ENCODE measurements at regions of chr10 and their contacts with region 1.

Region 1: GRCh38 chr10:116654816-116655215 is 34.1 kb downstream of the PNLIPRP2 start:
- DNase-seq: peak; percentile 32
- ATAC-seq: peak; percentile 98
- H3K4me3 Mint-ChIP-seq: no peak overlapping the region
- H3K27ac Mint-ChIP-seq: no peak overlapping the region
- H3K4me1 Mint-ChIP-seq: no peaks in the 10 kb centered on the region
- H3K27me3 Mint-ChIP-seq: no peaks in the 10 kb centered on the region; the same call in 1 of the 2 replicates
- CTCF ChIP-seq: peak; percentile 31; the same call in 1 of the 2 replicates

Region 2: GRCh38 chr10:116353817-116354216 is 301.0 kb before region 1 on chr10:
- CTCF ChIA-PET with region 1: no interaction called
- POLR2A ChIA-PET with region 1: no interaction called
- DNase-seq: no peak
- ATAC-seq: no peak
- H3K4me3 Mint-ChIP-seq: no peak overlapping the region
- H3K27ac Mint-ChIP-seq: no peak overlapping the region
- H3K4me1 Mint-ChIP-seq: peaks cover 11% of the 10 kb centered on the region
- H3K27me3 Mint-ChIP-seq: no peaks in the 10 kb centered on the region
- CTCF ChIP-seq: no peak

Region 3: GRCh38 chr10:116553378-116553980 is 101.3 kb before region 1 on chr10:
- CTCF ChIA-PET with region 1: no interaction called
- POLR2A ChIA-PET with region 1: no interaction called
- DNase-seq: no peak
- ATAC-seq: no peak
- H3K4me3 Mint-ChIP-seq: no peak overlapping the region
- H3K27ac Mint-ChIP-seq: no peak overlapping the region
- H3K4me1 Mint-ChIP-seq: peaks cover 21% of the 10 kb centered on the region
- H3K27me3 Mint-ChIP-seq: no peaks in the 10 kb centered on the region
- CTCF ChIP-seq: no peak

Region 4: GRCh38 chr10:116683821-116684220 is 29.0 kb after region 1 on chr10:
- CTCF ChIA-PET with region 1: interaction called, 11 read pairs
- POLR2A ChIA-PET with region 1: no interaction called
- DNase-seq: no peak
- ATAC-seq: no peak
- H3K4me3 Mint-ChIP-seq: no peak overlapping the region
- H3K27ac Mint-ChIP-seq: no peak overlapping the region
- H3K4me1 Mint-ChIP-seq: peaks cover 20% of the 10 kb centered on the region
- H3K27me3 Mint-ChIP-seq: no peaks in the 10 kb centered on the region
- CTCF ChIP-seq: no peak